Head of caudate nucleus (tissue), 42 donors: ENCODE measurements at regions of chr15 and their contacts with region 1.

Region 1: DNA sequence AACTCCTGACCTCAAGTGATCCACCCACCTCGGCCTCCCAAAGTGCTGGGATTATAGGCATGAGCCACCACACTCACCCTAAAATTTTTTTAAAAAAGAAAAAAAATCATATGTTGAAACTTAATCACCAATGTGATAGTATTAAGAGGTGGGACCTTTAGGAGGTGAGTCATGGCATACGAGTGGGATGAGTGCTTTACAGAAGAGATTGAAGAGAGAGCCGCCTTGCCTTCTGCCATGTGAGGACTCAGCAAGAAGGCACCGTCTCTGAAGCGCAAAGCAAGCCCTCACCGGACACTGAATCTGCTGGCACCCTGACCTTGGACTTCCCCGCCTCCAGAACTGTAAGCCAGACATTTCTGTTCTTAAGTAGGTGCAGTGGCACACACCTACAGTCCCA is 5.5 kb downstream of the ARPIN start:
- DNase-seq: peak in 25 of 42 donors; percentile 17 to 85 (median 51)

Region 2: DNA sequence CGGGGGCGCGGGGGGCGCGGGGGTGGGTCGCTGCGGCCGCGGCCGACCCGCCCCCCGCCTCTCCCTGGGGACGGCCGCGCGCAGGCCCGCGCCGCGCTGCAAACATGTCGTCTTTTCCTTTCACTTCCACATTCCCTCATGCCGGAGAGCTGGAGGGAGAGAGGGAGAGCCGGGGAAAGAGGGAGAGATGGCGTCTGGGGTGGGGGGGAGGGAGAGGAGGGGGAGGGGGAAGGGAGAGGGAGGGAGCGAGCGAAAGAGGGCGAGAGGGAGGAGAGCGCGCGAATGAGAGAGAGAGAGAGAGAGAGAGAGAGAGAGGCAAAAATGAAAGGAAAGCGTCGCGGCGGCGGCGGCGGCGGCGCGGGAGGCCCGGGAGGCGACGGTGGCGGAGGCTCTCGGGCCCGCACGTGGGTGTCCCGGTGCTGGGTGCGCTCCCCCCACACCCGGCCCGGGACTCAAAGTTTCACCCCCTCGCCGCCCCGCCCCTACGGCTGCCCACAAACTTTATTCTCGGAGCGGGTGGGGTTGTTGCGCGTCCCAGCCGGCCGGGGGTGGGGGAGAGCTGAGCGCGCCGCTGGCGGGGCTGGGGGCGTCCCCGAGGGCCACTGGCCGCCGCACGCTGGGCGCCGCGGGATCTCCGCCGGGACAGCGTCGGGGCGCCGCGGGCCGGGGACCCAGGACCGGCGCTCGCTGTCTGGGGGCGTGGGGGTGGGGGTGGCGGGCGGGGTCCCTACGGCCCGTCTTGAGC is 94.6 kb after region 1 on chr15:
- intact Hi-C with region 1: no loop called
- DNase-seq: peak in 38 of 42 donors; percentile 34 to 80 (median 63)

Region 3: GRCh38 chr15:90062023-90062442 is 154.7 kb after region 1 on chr15:
- intact Hi-C with region 1: loop called (anchors 5 kb)
- DNase-seq: peak in 18 of 42 donors; percentile 37 to 74 (median 52)